PC-9 (cell line): ENCODE measurements at regions of chr3 and their contacts with region 1.

Region 1: DNA sequence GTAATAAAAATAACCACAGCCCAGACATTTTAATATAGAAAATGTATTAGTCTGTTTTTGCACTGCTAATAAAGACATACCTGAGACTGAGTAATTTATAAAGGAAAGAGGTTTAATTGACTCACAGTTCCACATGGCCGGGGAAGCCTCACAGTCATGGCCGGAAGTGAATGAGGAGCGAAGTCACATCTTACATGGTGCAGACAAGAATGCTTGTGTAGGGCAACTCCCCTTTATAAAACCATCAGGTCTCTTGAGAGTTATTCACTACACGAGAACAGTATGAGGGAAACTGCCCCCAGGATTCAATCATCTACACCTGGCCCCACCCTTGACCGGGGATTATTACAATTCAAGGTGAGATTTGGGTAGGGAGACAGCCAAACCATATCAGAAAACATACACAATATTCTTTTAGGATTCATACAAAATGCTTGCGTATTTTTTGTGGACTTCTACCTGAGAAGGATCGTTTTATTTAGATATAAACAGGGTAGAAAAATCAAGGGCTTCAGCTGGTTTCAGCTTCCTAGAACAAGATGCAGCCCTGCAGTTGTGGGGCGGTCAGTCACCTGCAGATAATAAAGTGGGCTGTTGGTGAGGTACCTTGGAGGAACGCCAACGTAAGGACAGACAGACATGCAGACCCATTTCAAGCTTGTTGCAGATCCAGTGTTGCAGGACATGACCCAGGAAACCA is 101.9 kb downstream of the TNIK start:
- DNase-seq: no peak
- H3K4me3 ChIP-seq: no peak overlapping the region
- H3K27ac ChIP-seq: no peak overlapping the region
- H3K4me1 ChIP-seq: peaks cover 39% of the 10 kb centered on the region
- H3K27me3 ChIP-seq: no peaks in the 10 kb centered on the region
- CTCF ChIP-seq: no peak

Region 2: DNA sequence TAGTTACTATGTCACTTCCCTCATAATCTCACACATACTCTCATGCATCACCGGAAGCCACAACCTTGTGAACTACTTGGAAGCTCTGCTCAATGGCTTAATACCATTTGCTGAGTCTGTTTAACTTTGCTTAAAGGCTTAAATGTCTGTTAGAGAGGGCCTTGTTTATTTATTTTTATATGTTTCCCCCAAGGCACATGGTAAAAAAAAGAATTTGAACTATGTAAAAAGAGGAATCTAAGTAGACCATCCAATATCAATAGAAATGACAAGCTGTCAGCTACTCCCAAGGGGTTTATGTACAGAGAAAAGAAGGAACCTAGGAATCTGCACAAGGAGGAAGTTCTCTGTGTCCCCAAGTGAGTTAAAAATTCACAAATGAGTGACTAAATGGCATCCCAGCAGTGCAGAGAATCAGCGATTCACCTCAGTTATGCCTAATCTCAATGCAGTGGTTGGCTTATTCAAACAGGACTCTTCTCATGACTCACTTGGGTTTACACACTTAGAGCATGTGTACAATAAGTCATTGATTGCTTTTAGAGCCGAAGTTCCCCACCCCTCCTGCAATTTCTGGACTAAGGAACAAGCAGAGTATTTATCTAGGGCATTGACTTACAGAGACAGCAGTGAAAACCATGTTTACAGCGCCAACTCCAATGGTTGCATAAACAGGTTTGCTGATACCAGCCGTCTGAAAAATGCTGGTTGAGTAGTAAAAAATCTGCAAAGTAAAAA is 356.2 kb before region 1 on chr3:
- CTCF ChIA-PET with region 1: no interaction called
- POLR2A ChIA-PET with region 1: no interaction called
- intact Hi-C with region 1: loop called (anchors 5 kb)
- DNase-seq: peak in 1 of 2 experiments; percentile 84
- H3K4me3 ChIP-seq: no peak overlapping the region
- H3K27ac ChIP-seq: no peak overlapping the region
- H3K4me1 ChIP-seq: peaks cover 55% of the 10 kb centered on the region
- H3K27me3 ChIP-seq: no peaks in the 10 kb centered on the region
- CTCF ChIP-seq: no peak